ENCODE measurements at regions of chr10 and their contacts with region 1.

Region 1: DNA sequence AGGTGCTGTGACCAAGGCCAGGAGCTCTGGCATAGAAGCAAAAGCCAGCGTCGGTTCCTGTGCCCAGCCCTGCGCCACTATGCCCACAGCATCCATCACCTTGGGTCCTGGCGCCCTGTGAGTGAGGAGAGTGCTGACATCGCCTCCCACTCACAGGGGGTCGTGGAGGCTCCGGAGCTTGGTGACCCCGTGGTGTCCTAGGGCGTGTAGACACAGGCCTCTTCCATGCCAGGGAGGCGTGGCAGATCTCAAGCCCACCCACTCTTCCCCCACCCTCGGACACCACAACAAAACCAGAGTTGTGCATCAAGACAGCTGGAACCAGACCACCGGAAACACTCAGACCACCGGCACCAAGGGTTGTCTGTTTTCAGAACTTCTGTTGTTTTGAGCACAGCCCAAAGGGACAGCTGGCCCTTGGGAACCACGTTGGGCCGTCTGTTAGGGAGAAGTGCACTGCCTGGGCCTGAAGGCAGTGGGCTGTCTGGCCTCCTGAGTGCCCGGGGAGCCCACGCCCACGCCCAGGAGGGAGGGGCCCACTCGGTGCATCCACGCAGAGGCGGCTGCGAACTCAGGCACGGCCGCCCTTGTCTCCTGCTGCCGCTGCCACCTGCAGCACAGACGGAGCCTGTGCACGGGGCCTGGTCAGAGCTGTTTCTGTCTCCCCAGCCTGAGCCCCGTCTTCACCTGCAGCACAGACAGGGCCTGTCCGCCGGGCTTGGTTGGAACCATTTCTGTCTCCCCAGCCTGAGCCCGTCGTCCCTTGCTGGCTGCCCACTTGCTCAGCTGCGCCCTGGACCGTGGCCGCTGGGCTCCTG is 106.3 kb downstream of the INPP5A start:
- DNase-seq: peak in 1 of 3 donors; percentile 48
- ATAC-seq: peak in 1 of 2 donors; percentile 35
- H3K4me3 ChIP-seq: no peak overlapping the region
- H3K27ac ChIP-seq: no peak overlapping the region
- H3K4me1 ChIP-seq: no peaks in the 10 kb centered on the region
- H3K27me3 ChIP-seq: no peaks in the 10 kb centered on the region

Region 2: DNA sequence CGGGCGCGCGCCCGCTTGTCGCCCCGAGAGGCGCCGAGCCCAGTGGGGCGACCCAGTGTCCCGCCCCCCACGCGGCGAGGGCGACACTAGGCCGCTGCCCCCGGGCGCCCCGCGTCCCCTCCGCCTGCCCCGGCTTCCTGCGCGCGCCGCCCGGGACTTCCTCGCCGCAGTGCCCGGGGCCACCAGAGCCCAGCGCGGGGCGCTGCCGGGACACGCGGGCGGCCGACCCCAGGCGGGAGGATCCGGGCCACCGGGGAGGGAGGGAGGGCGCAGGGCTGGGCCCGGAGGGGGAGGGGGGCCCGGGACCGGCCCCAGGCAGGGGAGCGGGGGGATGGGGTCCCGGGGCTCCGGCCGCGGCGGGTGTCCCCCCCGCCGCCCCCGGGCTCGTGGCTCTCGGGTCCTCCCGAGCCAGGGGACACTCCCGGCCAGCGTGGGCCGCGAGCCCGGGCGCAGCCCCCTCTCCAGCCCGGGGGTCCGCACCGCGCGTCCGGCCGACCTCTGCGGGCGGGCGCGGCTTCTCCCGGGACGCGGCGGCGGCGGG is 247.4 kb before region 1 on chr10:
- intact Hi-C with region 1: loop called in 1 of 4 experiments (anchors 10 kb)
- DNase-seq: peak; percentile 69 to 89 (median 88)
- ATAC-seq: peak; percentile 23 to 43
- H3K4me3 ChIP-seq: peak overlapping the region; percentile 86
- H3K27ac ChIP-seq: peak overlapping the region; percentile 77
- H3K4me1 ChIP-seq: no peaks in the 10 kb centered on the region
- H3K27me3 ChIP-seq: no peaks in the 10 kb centered on the region

Region 3: GRCh38 chr10:132554991-132555647 is 88.8 kb before region 1 on chr10:
- intact Hi-C with region 1: no loop called
- DNase-seq: peak; percentile 59 to 80 (median 73)
- ATAC-seq: peak; percentile 46 to 79
- H3K4me3 ChIP-seq: no peak overlapping the region
- H3K27ac ChIP-seq: no peak overlapping the region
- H3K4me1 ChIP-seq: peaks cover 10% of the 10 kb centered on the region
- H3K27me3 ChIP-seq: no peaks in the 10 kb centered on the region

Measured in right cardiac atrium (tissue), 5 donors.